Natural killer cell (primary cell): ENCODE measurements at regions of chr10 and their contacts with region 1.

Region 1: GRCh38 chr10:70549962-70550458 is 52.5 kb downstream of the PRF1 start:
- DNase-seq: peak; percentile 77 to 86
- ATAC-seq: peak; percentile 82 to 100 (median 97)
- H3K4me3 ChIP-seq: no peak overlapping the region
- H3K4me3 Mint-ChIP-seq: no peak overlapping the region
- H3K27ac ChIP-seq: no peak overlapping the region
- H3K27ac Mint-ChIP-seq: no peak overlapping the region
- H3K4me1 ChIP-seq: peaks cover 7% of the 10 kb centered on the region
- H3K4me1 Mint-ChIP-seq: peaks cover 6 to 12% of the 10 kb centered on the region in 2 donors
- H3K27me3 ChIP-seq: no peaks in the 10 kb centered on the region
- H3K27me3 Mint-ChIP-seq: no peaks in the 10 kb centered on the region
- CTCF ChIP-seq: peak; percentile 89

Region 2: DNA sequence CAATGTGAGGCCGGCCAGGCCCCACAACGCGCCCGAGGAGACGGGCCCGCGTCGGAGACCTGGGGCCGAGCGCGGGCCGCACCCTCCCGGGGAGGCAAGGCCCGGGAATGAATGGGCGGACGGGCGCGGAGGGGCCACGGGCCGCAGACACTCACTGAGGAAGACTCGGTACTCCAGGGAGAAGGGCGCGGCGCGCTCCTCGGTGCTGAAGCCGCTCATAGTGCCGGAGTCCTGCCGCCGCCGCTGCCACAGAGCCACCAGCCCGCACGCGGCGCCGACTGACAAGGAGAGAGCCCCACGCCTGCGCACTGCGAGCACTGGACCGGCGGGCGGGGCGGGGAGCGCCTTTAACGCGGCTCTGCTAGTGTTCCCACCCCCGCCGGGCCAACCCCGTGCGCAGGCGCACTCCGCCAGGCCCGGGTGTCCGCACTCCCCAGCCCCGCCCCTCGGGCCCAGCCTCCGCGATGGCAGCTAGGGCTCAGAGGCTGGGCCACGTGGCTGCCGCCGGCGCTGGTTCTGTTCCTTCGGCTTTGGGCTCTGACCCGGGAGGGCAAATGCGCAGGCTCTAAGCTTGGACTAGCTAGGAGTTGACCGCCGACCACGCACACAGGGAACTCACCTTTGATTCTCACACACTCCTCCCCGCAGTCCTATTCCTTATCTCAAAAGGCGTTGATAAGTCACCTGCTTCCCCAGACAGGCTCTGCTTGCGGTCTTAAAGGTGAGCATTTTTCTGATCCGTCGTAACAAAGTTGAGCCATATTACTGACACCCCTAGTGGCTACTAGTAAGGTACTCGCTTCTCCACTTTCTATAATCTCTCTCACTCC is 316.7 kb before region 1 on chr10 and contains the start of gene PPA1:
- intact Hi-C with region 1: no loop called
- DNase-seq: peak; percentile 99
- ATAC-seq: peak; percentile 96 to 100 (median 97)
- H3K4me3 ChIP-seq: peak within 1 kb of the TSS; percentile 69
- H3K4me3 Mint-ChIP-seq: peak within 1 kb of the TSS; percentile 89
- H3K27ac ChIP-seq: peak within 1 kb of the TSS; percentile 78
- H3K27ac Mint-ChIP-seq: peak within 1 kb of the TSS; percentile 58 to 85
- H3K4me1 ChIP-seq: peaks cover 18% of the 10 kb centered on the region
- H3K4me1 Mint-ChIP-seq: peaks cover 15 to 17% of the 10 kb centered on the region in 2 donors
- H3K27me3 ChIP-seq: no peaks in the 10 kb centered on the region
- H3K27me3 Mint-ChIP-seq: peaks cover 0 to 6% of the 10 kb centered on the region in 2 donors
- CTCF ChIP-seq: no peak
- total RNA-seq, gene PPA1: 17.0 to 26.5 (median 19.2) TPM

Region 3: DNA sequence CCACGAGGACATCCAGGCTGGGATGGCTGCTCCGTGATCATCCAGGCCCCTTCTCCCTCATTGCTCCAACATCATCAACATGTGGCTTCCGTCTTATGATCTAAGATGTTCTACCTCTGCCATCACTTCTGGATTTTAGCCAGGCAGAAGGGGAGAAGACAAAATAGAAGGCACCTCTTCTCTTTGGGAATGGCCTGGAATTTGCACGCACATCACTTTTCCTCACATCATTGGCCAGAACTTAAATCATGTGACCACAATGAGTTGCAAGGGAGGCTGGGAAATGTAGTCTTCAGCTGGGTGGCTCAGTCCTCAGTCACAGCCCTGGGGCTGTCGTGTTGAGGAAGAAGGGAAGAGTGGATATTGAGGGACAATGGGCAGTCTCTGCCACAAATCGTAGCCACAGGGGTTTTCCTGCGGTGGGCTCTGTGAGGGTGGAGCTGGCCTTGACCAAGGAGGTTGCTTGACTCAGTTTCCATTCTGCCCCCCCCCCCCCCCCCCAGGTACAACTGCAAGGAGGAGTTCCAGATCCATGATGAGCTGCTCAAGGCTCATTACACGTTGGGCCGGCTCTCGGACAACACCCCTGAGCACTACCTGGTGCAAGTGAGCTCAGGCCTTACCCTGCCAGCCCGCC is 21.2 kb before region 1 on chr10:
- intact Hi-C with region 1: no loop called
- DNase-seq: no peak
- ATAC-seq: peak in 1 of 3 donors; percentile 38
- H3K4me3 ChIP-seq: no peak overlapping the region
- H3K4me3 Mint-ChIP-seq: no peak overlapping the region
- H3K27ac ChIP-seq: no peak overlapping the region
- H3K27ac Mint-ChIP-seq: no peak overlapping the region
- H3K4me1 ChIP-seq: peaks cover 2% of the 10 kb centered on the region
- H3K4me1 Mint-ChIP-seq: no peaks in the 10 kb centered on the region
- H3K27me3 ChIP-seq: no peaks in the 10 kb centered on the region
- H3K27me3 Mint-ChIP-seq: no peaks in the 10 kb centered on the region
- CTCF ChIP-seq: no peak

Region 4: DNA sequence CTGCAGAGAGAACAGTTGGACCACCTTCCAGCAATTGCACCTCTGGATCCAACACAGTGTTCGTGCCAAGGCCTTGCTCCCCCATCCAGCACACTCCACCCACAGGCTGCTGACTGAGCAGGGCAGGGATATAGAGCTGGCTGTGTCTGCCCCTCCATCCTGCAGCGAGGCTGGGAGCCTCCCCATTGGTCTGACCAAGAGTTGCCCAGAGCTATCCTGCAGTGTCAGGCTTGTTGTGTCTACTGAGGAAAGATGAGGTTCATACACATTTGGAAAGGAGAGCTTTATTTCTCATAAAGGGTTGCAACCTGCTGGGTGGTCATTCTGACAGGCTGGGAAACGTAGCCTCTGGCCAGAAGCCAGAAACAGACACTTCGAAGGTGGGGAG is 25.5 kb after region 1 on chr10:
- intact Hi-C with region 1: no loop called
- DNase-seq: no peak
- ATAC-seq: no peak
- H3K4me3 ChIP-seq: no peak overlapping the region
- H3K4me3 Mint-ChIP-seq: peak overlapping the region; percentile 91
- H3K27ac ChIP-seq: no peak overlapping the region
- H3K27ac Mint-ChIP-seq: peak overlapping the region; percentile 89 to 92
- H3K4me1 ChIP-seq: peaks cover 85% of the 10 kb centered on the region
- H3K4me1 Mint-ChIP-seq: peaks cover 84 to 86% of the 10 kb centered on the region in 2 donors
- H3K27me3 ChIP-seq: no peaks in the 10 kb centered on the region
- H3K27me3 Mint-ChIP-seq: no peaks in the 10 kb centered on the region
- CTCF ChIP-seq: no peak

Region 5: DNA sequence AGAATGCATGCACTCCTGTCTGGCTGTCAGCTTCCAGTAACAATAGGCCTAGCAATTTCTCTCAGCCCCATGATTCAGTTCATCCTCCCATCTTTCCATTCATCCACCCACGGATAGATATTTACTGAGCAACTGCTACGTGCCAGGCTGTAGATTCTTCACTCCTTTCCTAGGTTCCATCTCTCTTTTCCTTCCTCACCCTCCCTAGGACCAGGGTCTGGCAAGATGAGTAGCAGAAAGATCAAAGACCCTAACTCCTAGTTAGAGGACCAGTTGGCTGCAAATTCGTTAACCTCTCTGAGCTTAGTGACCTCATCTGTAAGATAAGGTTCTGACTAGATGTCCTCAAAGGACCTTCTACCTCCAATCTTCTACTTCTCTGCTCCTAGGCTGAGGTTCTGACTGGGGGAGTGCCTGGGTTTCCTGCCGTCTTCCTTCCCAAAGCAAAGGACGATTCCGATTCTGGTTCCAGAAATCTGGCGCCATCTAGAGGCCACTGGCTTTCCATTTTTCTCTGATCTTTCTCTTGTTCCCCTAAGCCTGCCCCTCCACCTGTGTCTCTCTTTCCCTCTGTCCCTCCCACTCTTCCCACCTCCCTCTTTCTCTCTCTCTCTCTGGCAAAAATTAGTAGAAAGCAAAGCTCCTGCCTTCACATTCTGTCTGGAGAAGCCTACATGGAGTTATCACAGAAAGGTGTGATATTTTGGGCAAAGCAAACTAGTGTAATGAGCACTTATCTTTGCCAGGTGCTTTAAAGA is 208.9 kb after region 1 on chr10:
- intact Hi-C with region 1: loop called (anchors 1 kb)
- DNase-seq: peak; percentile 63 to 82
- ATAC-seq: peak; percentile 40 to 77 (median 68)
- H3K4me3 ChIP-seq: no peak overlapping the region
- H3K4me3 Mint-ChIP-seq: no peak overlapping the region
- H3K27ac ChIP-seq: no peak overlapping the region
- H3K27ac Mint-ChIP-seq: peak overlapping the region in 1 of 2 donors; percentile 60
- H3K4me1 ChIP-seq: peaks cover 4% of the 10 kb centered on the region
- H3K4me1 Mint-ChIP-seq: peaks cover 15 to 16% of the 10 kb centered on the region in 2 donors
- H3K27me3 ChIP-seq: no peaks in the 10 kb centered on the region
- H3K27me3 Mint-ChIP-seq: no peaks in the 10 kb centered on the region
- CTCF ChIP-seq: peak; percentile 94

Region 6: GRCh38 chr10:70815504-70816219 is 265.7 kb after region 1 on chr10 and contains the start of gene SGPL1:
- intact Hi-C with region 1: loop called (anchors 2 kb)
- DNase-seq: peak; percentile 87 to 91
- ATAC-seq: peak; percentile 98 to 99 (median 98)
- H3K4me3 ChIP-seq: peak within 1 kb of the TSS; percentile 57
- H3K4me3 Mint-ChIP-seq: peak within 1 kb of the TSS; percentile 90
- H3K27ac ChIP-seq: peak within 1 kb of the TSS; percentile 45
- H3K27ac Mint-ChIP-seq: peak within 1 kb of the TSS; percentile 75 to 81
- H3K4me1 ChIP-seq: peaks cover 12% of the 10 kb centered on the region
- H3K4me1 Mint-ChIP-seq: peaks cover 15 to 36% of the 10 kb centered on the region in 2 donors
- H3K27me3 ChIP-seq: no peaks in the 10 kb centered on the region
- H3K27me3 Mint-ChIP-seq: no peaks in the 10 kb centered on the region
- CTCF ChIP-seq: peak; percentile 95
- total RNA-seq, gene SGPL1: 33.7 to 48.4 (median 47.8) TPM